Activated CD4-positive, alpha-beta T cell treated with anti-CD3 and anti-CD28 coated beads, Interleukin-2, amount 10 ng/mL, durations not matched to agents 24 days and 14 days (primary cell): ENCODE measurements at regions of chr20 and their contacts with region 1.

Region 1: GRCh38 chr20:44651684-44652423 is at the start of gene ADA:
- DNase-seq: peak; percentile 87
- H3K4me3 Mint-ChIP-seq: peak within 1 kb of the TSS; percentile 89
- H3K27ac Mint-ChIP-seq: peak within 1 kb of the TSS; percentile 88
- H3K4me1 Mint-ChIP-seq: peaks cover 48% of the 10 kb centered on the region
- H3K27me3 Mint-ChIP-seq: no peaks in the 10 kb centered on the region
- total RNA-seq, gene ADA: 43.7 and 44.5 TPM in 2 replicates

Region 2: GRCh38 chr20:44475694-44476560 is 175.9 kb before region 1 on chr20 and contains the start of gene TTPAL:
- intact Hi-C with region 1: loop called (anchors 1 kb)
- DNase-seq: peak; percentile 98
- H3K4me3 Mint-ChIP-seq: peak within 1 kb of the TSS; percentile 99
- H3K27ac Mint-ChIP-seq: peak within 1 kb of the TSS; percentile 99
- H3K4me1 Mint-ChIP-seq: peaks cover 12% of the 10 kb centered on the region
- H3K27me3 Mint-ChIP-seq: no peaks in the 10 kb centered on the region
- total RNA-seq, gene TTPAL: 22.6 and 23.2 TPM in 2 replicates

Region 3: GRCh38 chr20:44666066-44666465 is 14.2 kb after region 1 on chr20:
- intact Hi-C with region 1: loop called (anchors 2 kb)
- DNase-seq: no peak
- H3K4me3 Mint-ChIP-seq: no peak overlapping the region
- H3K27ac Mint-ChIP-seq: no peak overlapping the region
- H3K4me1 Mint-ChIP-seq: peaks cover 23% of the 10 kb centered on the region
- H3K27me3 Mint-ChIP-seq: no peaks in the 10 kb centered on the region